Pancreas (tissue), 10 donors: ENCODE measurements at regions of chr1 and their contacts with region 1.

Region 1: GRCh38 chr1:56569661-56570060 is 9.7 kb downstream of the PLPP3 start:
- DNase-seq: no peak
- ATAC-seq: peak; percentile 31 to 57 (median 54)
- H3K4me3 ChIP-seq: no peak overlapping the region
- H3K27ac ChIP-seq: peak overlapping the region in 1 of 4 donors; percentile 17
- H3K4me1 ChIP-seq: peaks cover 59 to 75% (median 62%) of the 10 kb centered on the region in 3 donors
- H3K27me3 ChIP-seq: no peaks in the 10 kb centered on the region
- CTCF ChIP-seq: no peak

Region 2: GRCh38 chr1:56456436-56457101 is 113.1 kb before region 1 on chr1:
- intact Hi-C with region 1: no loop called
- DNase-seq: no peak
- ATAC-seq: peak in 2 of 4 donors; percentile 19 to 25
- H3K4me3 ChIP-seq: no peak overlapping the region
- H3K27ac ChIP-seq: no peak overlapping the region
- H3K4me1 ChIP-seq: no peaks in the 10 kb centered on the region
- H3K27me3 ChIP-seq: no peaks in the 10 kb centered on the region
- CTCF ChIP-seq: no peak

Region 3: GRCh38 chr1:56508523-56508983 is 61.1 kb before region 1 on chr1:
- intact Hi-C with region 1: loop called in 1 of 3 experiments (anchors 10 kb)
- DNase-seq: peak; percentile 68 to 87 (median 80)
- ATAC-seq: peak; percentile 84 to 95 (median 92)
- H3K4me3 ChIP-seq: no peak overlapping the region
- H3K27ac ChIP-seq: peak overlapping the region in 3 of 4 donors; percentile 14 to 73 (median 68)
- H3K4me1 ChIP-seq: peaks cover 17 to 49% (median 20%) of the 10 kb centered on the region in 3 donors
- H3K27me3 ChIP-seq: no peaks in the 10 kb centered on the region
- CTCF ChIP-seq: no peak